Transverse colon (tissue), 4 donors: ENCODE measurements at regions of chr10 and their contacts with region 1.

Region 1: DNA sequence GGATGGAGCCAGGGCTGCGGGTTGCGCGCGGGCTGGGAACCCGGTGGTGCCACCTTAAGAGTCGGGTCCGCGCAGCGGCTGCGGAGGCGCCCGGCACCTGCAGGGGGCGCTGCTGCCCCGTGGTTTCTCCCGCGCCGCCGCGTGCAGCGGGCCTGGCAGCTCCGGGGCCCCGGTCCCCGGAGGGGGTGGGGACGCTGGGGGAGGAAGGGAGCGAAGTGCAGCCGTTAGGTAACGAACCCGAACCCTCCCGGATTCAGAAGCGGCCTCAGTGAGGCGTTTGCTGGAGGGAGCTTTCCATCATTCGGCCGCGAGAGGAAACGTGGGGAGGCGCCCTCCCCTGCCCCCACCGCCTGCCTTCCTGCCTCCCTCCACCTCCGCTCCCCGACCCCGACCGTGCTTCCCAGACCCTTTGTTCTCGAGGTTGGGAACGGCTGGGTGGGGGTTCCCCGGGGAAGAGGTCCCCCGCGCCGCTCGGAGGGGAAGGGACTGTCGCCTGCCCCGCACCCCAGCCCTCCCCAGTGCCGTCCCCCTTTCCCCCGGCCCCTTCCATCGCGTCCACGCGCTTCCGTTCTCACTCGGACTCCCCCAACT is 29.6 kb downstream of the SKIDA1 start:
- DNase-seq: peak; percentile 84
- H3K4me3 ChIP-seq: peak overlapping the region; percentile 28 to 62 (median 48)
- H3K27ac ChIP-seq: peak overlapping the region; percentile 11 to 60 (median 58)
- H3K4me1 ChIP-seq: peaks cover 0 to 43% (median 31%) of the 10 kb centered on the region in 4 donors
- H3K27me3 ChIP-seq: peaks cover 78% of the 10 kb centered on the region
- CTCF ChIP-seq: peak; percentile 78 to 99 (median 97)
- EP300 ChIP-seq: no peak
- POLR2A ChIP-seq: no peak

Region 2: GRCh38 chr10:21278491-21279239 is 217.2 kb before region 1 on chr10:
- in situ Hi-C with region 1: loop called in 2 of 4 experiments (anchors 10 to 25 kb)
- intact Hi-C with region 1: loop called (anchors 10 kb)
- DNase-seq: peak; percentile 88
- H3K4me3 ChIP-seq: no peak overlapping the region
- H3K27ac ChIP-seq: no peak overlapping the region
- H3K4me1 ChIP-seq: no peaks in the 10 kb centered on the region
- H3K27me3 ChIP-seq: no peaks in the 10 kb centered on the region
- CTCF ChIP-seq: peak; percentile 57 to 73 (median 65)
- EP300 ChIP-seq: no peak
- POLR2A ChIP-seq: no peak

Region 3: GRCh38 chr10:21533467-21534279 is 37.8 kb after region 1 on chr10 and contains the start of gene MLLT10:
- in situ Hi-C with region 1: no loop called
- intact Hi-C with region 1: loop called (anchors 5 kb)
- DNase-seq: peak; percentile 94
- H3K4me3 ChIP-seq: peak within 1 kb of the TSS; percentile 68 to 93 (median 82)
- H3K27ac ChIP-seq: peak within 1 kb of the TSS; percentile 91 to 98 (median 95)
- H3K4me1 ChIP-seq: peaks cover 0 to 36% (median 14%) of the 10 kb centered on the region in 4 donors
- H3K27me3 ChIP-seq: peaks cover 6% of the 10 kb centered on the region
- CTCF ChIP-seq: peak; percentile 33 to 80 (median 42)
- EP300 ChIP-seq: no peak
- POLR2A ChIP-seq: peak; percentile 77
- total RNA-seq, gene MLLT10: 12.0 to 43.0 (median 28.5) TPM

Region 4: GRCh38 chr10:21732067-21732772 is 236.4 kb after region 1 on chr10:
- in situ Hi-C with region 1: loop called (anchors 10 kb)
- intact Hi-C with region 1: loop called (anchors 5 kb)
- DNase-seq: peak; percentile 26
- H3K4me3 ChIP-seq: no peak overlapping the region
- H3K27ac ChIP-seq: no peak overlapping the region
- H3K4me1 ChIP-seq: peaks cover 0 to 11% (median 5%) of the 10 kb centered on the region in 4 donors
- H3K27me3 ChIP-seq: no peaks in the 10 kb centered on the region
- CTCF ChIP-seq: peak; percentile 46 to 68 (median 56)
- EP300 ChIP-seq: no peak
- POLR2A ChIP-seq: no peak

Region 5: DNA sequence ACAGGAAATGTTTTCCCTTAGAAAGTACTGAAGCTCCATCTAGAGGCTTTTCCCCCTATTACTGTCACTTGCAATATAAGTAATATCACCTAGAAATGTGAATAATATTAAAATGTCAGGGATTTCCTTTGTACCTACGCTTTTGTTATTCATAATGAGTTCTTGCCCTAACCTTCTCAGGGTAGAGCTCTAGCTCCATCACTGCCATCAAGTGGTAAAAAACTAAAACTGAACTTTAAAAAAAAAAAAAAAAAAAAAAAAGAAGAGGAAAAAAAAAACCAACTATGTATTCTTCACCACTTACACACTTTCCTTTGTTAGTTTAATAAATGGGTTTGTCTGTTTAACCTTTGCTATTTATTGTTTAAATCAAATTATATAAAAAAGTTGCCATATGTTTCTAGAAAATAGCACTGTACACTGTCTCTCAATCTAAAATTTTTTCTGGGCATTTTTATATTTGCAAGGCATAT is 457.8 kb after region 1 on chr10:
- in situ Hi-C with region 1: loop called (anchors 25 kb)
- intact Hi-C with region 1: no loop called
- DNase-seq: no peak
- H3K4me3 ChIP-seq: no peak overlapping the region
- H3K27ac ChIP-seq: no peak overlapping the region
- H3K4me1 ChIP-seq: peaks cover 0 to 3% (median 0%) of the 10 kb centered on the region in 4 donors
- H3K27me3 ChIP-seq: no peaks in the 10 kb centered on the region
- CTCF ChIP-seq: peak in 4 of 5 experiments; percentile 14 to 32 (median 22)
- EP300 ChIP-seq: no peak
- POLR2A ChIP-seq: no peak

Region 6: DNA sequence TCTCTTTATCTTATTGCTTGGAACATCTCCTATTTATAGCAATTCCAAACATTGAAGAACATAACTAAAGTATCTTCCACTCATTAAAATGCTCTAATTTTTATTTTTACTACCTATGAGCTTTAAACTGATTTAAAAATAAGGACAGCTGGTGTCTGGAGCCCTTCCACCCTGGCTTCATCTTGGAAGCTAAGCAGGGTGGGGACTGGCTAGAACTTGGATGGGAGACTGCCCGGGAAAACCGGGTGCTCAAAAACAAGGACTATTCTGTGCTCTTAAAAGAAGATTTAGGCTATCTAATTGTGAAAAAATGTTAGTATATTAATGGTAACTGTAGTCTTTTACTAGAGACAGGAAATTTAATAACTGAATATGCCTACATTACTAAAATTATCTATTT is 1501.3 kb after region 1 on chr10:
- in situ Hi-C with region 1: loop called in 3 of 4 experiments (anchors 10 to 25 kb)
- intact Hi-C with region 1: no loop called
- DNase-seq: no peak
- H3K4me3 ChIP-seq: no peak overlapping the region
- H3K27ac ChIP-seq: no peak overlapping the region
- H3K4me1 ChIP-seq: no peaks in the 10 kb centered on the region
- H3K27me3 ChIP-seq: peaks cover 9% of the 10 kb centered on the region
- CTCF ChIP-seq: no peak
- EP300 ChIP-seq: no peak
- POLR2A ChIP-seq: no peak